Sigmoid colon (tissue), 7 donors: ENCODE measurements at regions of chr7 and their contacts with region 1.

Region 1: DNA sequence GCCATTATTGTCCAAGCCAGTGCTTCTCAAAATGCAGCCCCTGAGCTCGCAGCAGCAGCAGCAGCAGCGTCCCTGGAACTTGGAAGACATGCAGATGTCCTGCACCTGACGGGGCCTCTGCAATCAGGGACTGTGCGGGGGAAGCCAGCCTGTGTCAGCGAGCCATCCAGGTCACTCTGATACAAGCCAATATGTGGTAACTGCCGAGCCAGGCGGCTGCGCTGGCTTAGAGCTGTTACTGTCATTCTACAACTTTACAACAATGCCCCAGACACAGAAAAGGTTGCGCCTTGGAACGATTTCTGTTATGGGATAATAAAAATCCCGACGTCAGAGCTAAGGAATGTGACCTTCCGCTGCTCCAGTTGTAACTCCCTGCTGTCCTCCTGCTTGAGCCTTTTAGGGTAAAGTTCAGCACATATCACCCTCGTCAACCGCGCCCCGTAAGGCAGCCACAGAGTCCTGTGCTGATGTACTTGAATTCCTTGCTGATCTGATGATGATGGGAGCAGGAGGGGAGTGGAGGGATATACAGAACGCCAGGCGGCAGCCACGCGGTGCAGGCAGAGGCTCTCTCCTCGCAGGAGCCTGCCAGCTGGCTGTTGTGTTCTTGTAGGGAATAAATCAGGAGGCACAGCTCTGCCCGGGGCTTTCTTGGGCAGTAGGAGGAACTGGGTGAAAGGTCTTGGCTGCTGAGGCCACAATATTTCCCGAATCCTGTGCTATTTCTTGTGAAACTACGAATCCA is 20.0 kb upstream of the CRYGN start:
- DNase-seq: peak; percentile 98
- H3K4me3 ChIP-seq: peak overlapping the region in 3 of 4 donors; percentile 13 to 29 (median 27)
- H3K27ac ChIP-seq: peak overlapping the region; percentile 85 to 98 (median 96)
- H3K4me1 ChIP-seq: peaks cover 0 to 34% (median 32%) of the 10 kb centered on the region in 4 donors
- H3K27me3 ChIP-seq: no peaks in the 10 kb centered on the region
- CTCF ChIP-seq: peak in 2 of 4 experiments; percentile 13 to 23
- EP300 ChIP-seq: peak; percentile 70 to 99 (median 92)
- POLR2A ChIP-seq: peak in 1 of 2 donors; percentile 12

Region 2: GRCh38 chr7:150941981-150942590 is 517.8 kb before region 1 on chr7:
- intact Hi-C with region 1: no loop called
- DNase-seq: peak; percentile 83
- H3K4me3 ChIP-seq: no peak overlapping the region
- H3K27ac ChIP-seq: peak overlapping the region in 3 of 4 donors; percentile 55 to 86 (median 60)
- H3K4me1 ChIP-seq: peaks cover 0 to 58% (median 53%) of the 10 kb centered on the region in 4 donors
- H3K27me3 ChIP-seq: no peaks in the 10 kb centered on the region
- CTCF ChIP-seq: no peak
- EP300 ChIP-seq: no peak
- POLR2A ChIP-seq: no peak

Region 3: GRCh38 chr7:151503902-151504714 is 44.2 kb after region 1 on chr7:
- intact Hi-C with region 1: loop called (anchors 2 kb)
- DNase-seq: peak; percentile 80
- H3K4me3 ChIP-seq: no peak overlapping the region
- H3K27ac ChIP-seq: peak overlapping the region; percentile 45 to 95 (median 82)
- H3K4me1 ChIP-seq: peaks cover 0 to 96% (median 76%) of the 10 kb centered on the region in 4 donors
- H3K27me3 ChIP-seq: no peaks in the 10 kb centered on the region
- CTCF ChIP-seq: no peak
- EP300 ChIP-seq: peak in 1 of 4 donors; percentile 16
- POLR2A ChIP-seq: no peak

Region 4: GRCh38 chr7:151519765-151520418 is 60.0 kb after region 1 on chr7 and contains the start of gene RHEB:
- intact Hi-C with region 1: loop called (anchors 2 kb)
- DNase-seq: peak; percentile 100
- H3K4me3 ChIP-seq: peak within 1 kb of the TSS; percentile 72 to 93 (median 80)
- H3K27ac ChIP-seq: peak within 1 kb of the TSS; percentile 94 to 99 (median 96)
- H3K4me1 ChIP-seq: peaks cover 0 to 40% (median 36%) of the 10 kb centered on the region in 4 donors
- H3K27me3 ChIP-seq: no peaks in the 10 kb centered on the region
- CTCF ChIP-seq: no peak
- EP300 ChIP-seq: peak in 2 of 4 donors; percentile 60 to 76
- POLR2A ChIP-seq: peak; percentile 25 to 47
- total RNA-seq, gene RHEB: 121 to 162 (median 136) TPM